ENCODE measurements at regions of chrX and their contacts with region 1.

Region 1: GRCh38 chrX:154762523-154763289 is at the start of gene DKC1:
- DNase-seq: peak; percentile 92
- H3K4me3 Mint-ChIP-seq: peak within 1 kb of the TSS; percentile 79
- H3K27ac Mint-ChIP-seq: peak within 1 kb of the TSS; percentile 79
- H3K4me1 Mint-ChIP-seq: peaks cover 6% of the 10 kb centered on the region
- H3K27me3 Mint-ChIP-seq: peaks cover 13% of the 10 kb centered on the region
- CTCF ChIP-seq: no peak
- total RNA-seq, gene DKC1: 149 and 196 TPM in 2 replicates

Region 2: GRCh38 chrX:154661170-154661569 is 101.5 kb before region 1 on chrX:
- CTCF ChIA-PET with region 1: no interaction called
- POLR2A ChIA-PET with region 1: no interaction called
- intact Hi-C with region 1: no loop called
- DNase-seq: no peak
- H3K4me3 Mint-ChIP-seq: no peak overlapping the region
- H3K27ac Mint-ChIP-seq: no peak overlapping the region
- H3K4me1 Mint-ChIP-seq: no peaks in the 10 kb centered on the region
- H3K27me3 Mint-ChIP-seq: no peaks in the 10 kb centered on the region
- CTCF ChIP-seq: no peak

Region 3: GRCh38 chrX:154775419-154776349 is 13.0 kb after region 1 on chrX:
- CTCF ChIA-PET with region 1: interaction called, 5 read pairs
- POLR2A ChIA-PET with region 1: interaction called, 14 read pairs
- intact Hi-C with region 1: no loop called
- DNase-seq: peak; percentile 69
- H3K4me3 Mint-ChIP-seq: no peak overlapping the region
- H3K27ac Mint-ChIP-seq: no peak overlapping the region
- H3K4me1 Mint-ChIP-seq: no peaks in the 10 kb centered on the region
- H3K27me3 Mint-ChIP-seq: peaks cover 11% of the 10 kb centered on the region
- CTCF ChIP-seq: no peak

Region 4: GRCh38 chrX:154804957-154805695 is 42.4 kb after region 1 on chrX and contains the start of gene MPP1:
- CTCF ChIA-PET with region 1: interaction called, 5 read pairs
- POLR2A ChIA-PET with region 1: interaction called, 45 read pairs
- intact Hi-C with region 1: loop called (anchors 2 kb)
- DNase-seq: peak; percentile 71
- H3K4me3 Mint-ChIP-seq: peak within 1 kb of the TSS; percentile 80
- H3K27ac Mint-ChIP-seq: peak within 1 kb of the TSS; percentile 85
- H3K4me1 Mint-ChIP-seq: peaks cover 8% of the 10 kb centered on the region
- H3K27me3 Mint-ChIP-seq: no peaks in the 10 kb centered on the region
- CTCF ChIP-seq: no peak
- total RNA-seq, gene MPP1: 11.8 and 12.7 TPM in 2 replicates

Region 5: DNA sequence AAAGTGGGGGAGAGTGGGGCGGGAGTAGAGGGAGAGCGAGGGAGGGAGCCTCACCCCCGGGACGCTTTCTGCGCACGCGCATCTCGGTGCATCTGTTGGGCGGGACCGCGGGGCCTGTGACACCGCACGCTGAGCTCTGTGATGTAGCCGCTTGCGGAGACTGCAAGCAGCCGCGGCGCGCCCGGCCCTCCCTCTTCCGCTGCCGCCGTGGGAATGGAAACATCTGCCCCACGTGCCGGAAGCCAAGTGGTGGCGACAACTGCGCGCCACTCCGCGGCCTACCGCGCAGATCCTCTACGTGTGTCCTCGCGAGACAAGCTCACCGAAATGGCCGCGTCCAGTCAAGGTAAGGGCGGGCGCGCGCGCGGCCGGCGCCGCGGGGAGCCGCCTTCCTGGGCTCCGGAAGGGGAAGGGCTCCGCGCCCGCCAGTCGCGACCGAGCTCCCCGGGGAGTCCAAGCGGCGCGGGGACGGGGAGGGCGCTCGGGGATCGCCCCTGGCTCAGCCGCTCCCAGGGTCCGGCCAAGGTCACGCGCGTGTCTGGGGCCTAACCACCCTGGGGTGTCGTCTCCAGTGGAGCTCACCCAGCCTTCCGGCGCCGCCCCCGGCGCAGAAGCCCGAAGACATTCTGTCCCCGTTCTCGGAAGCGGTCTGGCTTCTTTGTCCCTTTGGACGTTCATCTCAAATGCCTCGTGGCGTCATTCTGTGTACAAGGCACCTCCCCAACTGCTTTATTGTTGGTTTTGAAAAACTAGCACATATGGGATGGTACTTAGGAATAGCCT is 264.2 kb after region 1 on chrX and contains the start of gene FUNDC2:
- CTCF ChIA-PET with region 1: no interaction called
- POLR2A ChIA-PET with region 1: no interaction called
- intact Hi-C with region 1: no loop called
- DNase-seq: peak; percentile 88
- H3K4me3 Mint-ChIP-seq: peak within 1 kb of the TSS; percentile 75
- H3K27ac Mint-ChIP-seq: peak within 1 kb of the TSS; percentile 90
- H3K4me1 Mint-ChIP-seq: peaks cover 13% of the 10 kb centered on the region
- H3K27me3 Mint-ChIP-seq: peaks cover 36% of the 10 kb centered on the region
- CTCF ChIP-seq: no peak
- total RNA-seq, gene FUNDC2: 54.8 and 70.2 TPM in 2 replicates

Measured in MCF 10A (cell line).